Sigmoid colon (tissue), 7 donors: ENCODE measurements at regions of chr4 and their contacts with region 1.

Region 1: DNA sequence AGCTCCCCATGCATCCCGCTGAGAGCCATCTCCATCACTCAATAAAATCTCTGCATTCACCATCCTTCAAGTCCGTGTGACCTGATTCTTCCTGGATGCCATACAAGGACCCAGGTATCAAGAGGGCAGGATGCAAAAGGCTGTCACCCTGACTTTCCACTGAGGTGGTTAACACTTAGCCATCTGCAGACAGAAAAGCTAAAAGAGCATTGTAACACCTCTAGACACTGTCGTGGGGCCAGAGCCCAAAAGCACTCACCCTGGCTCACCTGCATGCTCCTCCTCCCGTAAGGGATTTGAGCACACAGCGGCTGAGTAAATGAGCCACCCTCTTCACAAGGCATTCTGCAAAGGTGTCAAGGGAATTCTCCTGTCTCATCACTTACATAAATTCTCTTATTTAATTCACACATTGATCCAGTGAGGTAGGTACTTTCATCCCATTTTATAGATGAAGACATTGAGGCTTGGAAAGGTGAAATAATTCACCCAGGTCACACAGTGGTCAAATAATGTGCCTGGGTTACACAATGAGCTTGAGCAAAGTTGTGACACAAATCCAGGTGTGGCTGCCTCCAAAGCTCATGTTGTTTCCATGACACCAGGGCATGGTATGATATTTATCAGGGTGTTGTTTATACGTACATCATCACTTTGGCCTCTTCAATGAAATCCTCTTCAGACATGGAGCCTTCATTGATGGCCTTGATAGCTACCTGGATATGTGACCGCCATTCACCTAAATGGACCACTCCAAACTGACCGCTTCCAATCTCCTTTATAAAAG is 48.0 kb downstream of the TXK start:
- DNase-seq: no peak
- H3K4me3 ChIP-seq: no peak overlapping the region
- H3K27ac ChIP-seq: no peak overlapping the region
- H3K4me1 ChIP-seq: no peaks in the 10 kb centered on the region
- H3K27me3 ChIP-seq: no peaks in the 10 kb centered on the region
- CTCF ChIP-seq: no peak
- EP300 ChIP-seq: no peak
- POLR2A ChIP-seq: no peak

Region 2: DNA sequence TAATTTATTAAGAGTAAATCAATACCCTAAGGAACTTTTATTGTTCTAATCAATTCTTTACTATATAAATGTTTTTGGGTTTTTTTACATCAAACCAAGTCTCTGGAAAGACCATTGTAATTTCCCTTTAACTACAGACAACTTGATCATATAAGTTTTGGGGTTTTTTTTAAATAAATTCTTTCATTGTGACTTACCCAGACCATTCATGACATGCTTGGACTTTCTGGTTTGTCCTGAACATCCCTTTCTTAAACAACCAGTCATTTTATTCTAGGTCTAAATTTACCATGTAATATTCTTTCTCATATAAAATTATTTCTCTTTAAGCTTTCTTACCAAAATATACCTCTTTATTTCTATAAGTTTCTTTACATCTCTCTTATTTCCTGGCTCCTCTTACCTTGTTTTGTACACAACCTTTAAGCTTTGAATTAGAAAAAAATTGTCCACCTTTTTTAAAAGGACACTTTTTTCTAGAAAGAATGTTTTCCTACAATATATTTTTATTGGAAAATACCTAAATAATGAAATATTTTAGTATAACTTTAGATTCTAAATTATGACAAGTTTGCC is 77.9 kb before region 1 on chr4:
- intact Hi-C with region 1: loop called (anchors 1 kb)
- DNase-seq: no peak
- H3K4me3 ChIP-seq: no peak overlapping the region
- H3K27ac ChIP-seq: no peak overlapping the region
- H3K4me1 ChIP-seq: no peaks in the 10 kb centered on the region
- H3K27me3 ChIP-seq: no peaks in the 10 kb centered on the region
- CTCF ChIP-seq: no peak
- EP300 ChIP-seq: no peak
- POLR2A ChIP-seq: no peak

Region 3: GRCh38 chr4:48016141-48017103 is 69.6 kb before region 1 on chr4 and contains the starts of genes CNGA1 and NIPAL1:
- intact Hi-C with region 1: loop called (anchors 5 kb)
- DNase-seq: peak; percentile 70
- H3K4me3 ChIP-seq: peak within 1 kb of the TSS; percentile 43 to 61 (median 52)
- H3K27ac ChIP-seq: no peak within 1 kb of the TSS
- H3K4me1 ChIP-seq: peaks cover 0 to 17% (median 13%) of the 10 kb centered on the region in 4 donors
- H3K27me3 ChIP-seq: peaks cover 0 to 10% (median 3%) of the 10 kb centered on the region in 3 donors
- CTCF ChIP-seq: no peak
- EP300 ChIP-seq: no peak
- POLR2A ChIP-seq: peak in 1 of 2 donors; percentile 47
- total RNA-seq, gene CNGA1: 0.16 TPM in 1 of 4 donors, not detected in the others
- total RNA-seq, gene NIPAL1: 0.33 to 0.81 (median 0.36) TPM in 3 of 4 donors, not detected in the other